ENCODE measurements at regions of chr3 and their contacts with region 1.

Region 1: DNA sequence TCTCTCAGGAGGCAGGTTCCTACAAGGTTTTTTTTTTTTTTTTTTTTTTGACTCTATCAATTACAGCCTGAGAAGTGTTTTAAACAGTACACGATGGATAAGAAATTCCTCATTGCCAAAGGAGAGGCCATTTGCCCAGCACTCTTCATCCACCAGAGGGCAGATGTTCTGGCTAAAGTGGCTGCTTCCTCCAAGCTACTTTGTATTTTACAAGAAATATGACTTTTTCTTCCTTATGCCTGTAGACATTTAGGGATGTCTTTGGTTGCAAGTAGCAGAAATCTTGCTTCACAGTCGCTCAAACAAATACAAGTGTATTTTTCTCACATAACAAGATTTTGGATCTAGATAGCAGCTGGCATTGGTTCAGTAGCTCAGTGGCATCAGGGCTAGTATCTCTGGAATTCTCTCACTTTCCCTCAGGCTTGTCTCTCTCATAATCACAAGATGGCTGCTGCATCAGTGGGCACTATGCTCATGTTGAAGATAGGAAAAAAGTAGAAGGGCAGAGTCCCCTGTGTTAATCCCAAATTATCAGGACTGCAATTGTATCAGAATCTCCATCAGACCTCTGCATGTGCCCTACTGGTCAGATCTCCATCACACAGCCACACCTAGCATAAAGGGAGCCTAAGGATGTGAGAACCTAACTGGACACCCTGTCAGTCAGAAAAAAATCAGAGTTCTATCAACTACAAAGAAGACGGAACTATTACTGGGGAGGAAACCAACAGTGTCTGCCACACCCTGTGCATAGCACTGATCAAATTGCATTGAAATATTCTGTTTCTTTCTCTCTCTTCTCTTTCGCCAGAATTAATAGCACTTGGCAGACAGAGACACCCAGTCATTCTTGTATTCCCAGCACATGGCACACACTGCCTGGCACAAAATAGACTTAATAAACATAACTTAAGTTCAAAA is 138.9 kb upstream of the COL8A1 start:
- DNase-seq: no peak
- H3K4me3 ChIP-seq: no peak overlapping the region
- H3K27ac ChIP-seq: no peak overlapping the region
- H3K4me1 ChIP-seq: no peaks in the 10 kb centered on the region
- H3K27me3 ChIP-seq: no peaks in the 10 kb centered on the region
- CTCF ChIP-seq: peak; percentile 11 to 62 (median 49)
- POLR2A ChIP-seq: no peak

Region 2: GRCh38 chr3:99607151-99607550 is 107.7 kb after region 1 on chr3:
- intact Hi-C with region 1: no loop called
- DNase-seq: no peak
- H3K4me3 ChIP-seq: no peak overlapping the region
- H3K27ac ChIP-seq: no peak overlapping the region
- H3K4me1 ChIP-seq: no peaks in the 10 kb centered on the region
- H3K27me3 ChIP-seq: no peaks in the 10 kb centered on the region
- CTCF ChIP-seq: no peak
- POLR2A ChIP-seq: no peak

Region 3: GRCh38 chr3:99747915-99748314 is 248.4 kb after region 1 on chr3:
- intact Hi-C with region 1: loop called (anchors 10 kb)
- DNase-seq: no peak
- H3K4me3 ChIP-seq: no peak overlapping the region
- H3K27ac ChIP-seq: no peak overlapping the region
- H3K4me1 ChIP-seq: no peaks in the 10 kb centered on the region
- H3K27me3 ChIP-seq: no peaks in the 10 kb centered on the region
- CTCF ChIP-seq: peak in 2 of 4 experiments; percentile 15 to 23
- POLR2A ChIP-seq: no peak

Region 4: GRCh38 chr3:99842826-99843589 is 343.5 kb after region 1 on chr3:
- intact Hi-C with region 1: no loop called
- DNase-seq: no peak
- H3K4me3 ChIP-seq: no peak overlapping the region
- H3K27ac ChIP-seq: peak overlapping the region in 1 of 2 donors; percentile 38
- H3K4me1 ChIP-seq: no peaks in the 10 kb centered on the region
- H3K27me3 ChIP-seq: no peaks in the 10 kb centered on the region
- CTCF ChIP-seq: peak; percentile 25 to 85 (median 74)
- POLR2A ChIP-seq: no peak